Dendritic cell treated with granulocyte-macrophage colony-stimulating factor and Interleukin-4, amounts not matched to agents 40 ng/mL and 50 ng/mL, for 4 days (primary cell): ENCODE measurements at regions of chr1 and their contacts with region 1.

Region 1: GRCh38 chr1:172826096-172826743 is 167.3 kb downstream of the FASLG start:
- H3K4me3 Mint-ChIP-seq: no peak overlapping the region
- H3K27ac Mint-ChIP-seq: no peak overlapping the region
- H3K4me1 Mint-ChIP-seq: peaks cover 5% of the 10 kb centered on the region
- H3K27me3 Mint-ChIP-seq: no peaks in the 10 kb centered on the region

Region 2: GRCh38 chr1:172686143-172686542 is 140.1 kb before region 1 on chr1:
- intact Hi-C with region 1: no loop called
- H3K4me3 Mint-ChIP-seq: no peak overlapping the region
- H3K27ac Mint-ChIP-seq: no peak overlapping the region
- H3K4me1 Mint-ChIP-seq: no peaks in the 10 kb centered on the region
- H3K27me3 Mint-ChIP-seq: no peaks in the 10 kb centered on the region

Region 3: GRCh38 chr1:173043253-173043652 is 217.0 kb after region 1 on chr1:
- intact Hi-C with region 1: loop called (anchors 10 kb)
- H3K4me3 Mint-ChIP-seq: no peak overlapping the region
- H3K27ac Mint-ChIP-seq: no peak overlapping the region
- H3K4me1 Mint-ChIP-seq: peaks cover 19% of the 10 kb centered on the region
- H3K27me3 Mint-ChIP-seq: no peaks in the 10 kb centered on the region